Activated CD4-positive, alpha-beta memory T cell treated with anti-CD3 and anti-CD28 coated beads for 36 hours (primary cell): ENCODE measurements at regions of chr5 and their contacts with region 1.

Region 1: DNA sequence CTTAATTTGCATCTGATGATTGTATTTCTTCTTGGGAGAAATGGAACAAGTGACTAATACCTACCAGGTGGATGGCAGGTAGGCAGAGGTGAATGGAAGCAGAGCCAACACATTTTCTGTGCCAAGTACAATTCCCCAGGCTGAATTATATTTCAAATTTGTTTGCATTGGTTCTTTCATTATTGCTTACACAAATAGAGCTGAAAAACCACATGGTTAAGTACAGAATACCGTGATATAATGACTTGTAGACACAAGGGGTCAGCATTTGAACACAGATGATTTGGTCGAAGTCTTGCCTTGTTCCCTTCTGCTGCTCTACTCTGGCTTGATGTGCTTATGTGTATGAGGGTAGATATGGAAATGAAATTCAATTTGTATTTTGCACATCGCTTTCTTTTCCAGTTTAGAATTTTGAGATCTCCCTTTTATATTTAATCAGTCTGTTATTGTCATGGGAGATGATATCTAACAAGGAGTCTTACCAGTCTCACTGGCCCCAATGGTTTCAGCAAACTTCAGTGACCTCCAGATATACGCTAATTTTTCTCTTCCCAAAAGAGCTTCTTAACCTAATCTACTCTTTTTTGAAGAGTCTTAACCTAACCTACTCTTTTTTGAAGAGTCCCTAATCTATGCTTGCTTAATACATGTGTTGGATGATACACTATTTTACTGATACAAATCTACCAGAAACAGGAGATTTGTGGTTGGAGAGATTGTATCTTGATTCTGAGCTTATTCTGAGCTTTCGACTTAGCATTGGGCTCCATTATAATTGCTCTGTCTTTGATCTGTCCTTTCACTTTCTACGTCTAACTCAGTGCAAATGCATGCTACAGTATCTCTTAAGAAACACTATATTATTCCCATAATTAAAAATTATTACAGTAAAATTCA is 88.1 kb downstream of the PCSK1 start:
- DNase-seq: no peak
- H3K4me3 Mint-ChIP-seq: no peak overlapping the region
- H3K27ac Mint-ChIP-seq: no peak overlapping the region
- H3K4me1 Mint-ChIP-seq: peaks cover 27% of the 10 kb centered on the region
- H3K27me3 Mint-ChIP-seq: peaks cover 26% of the 10 kb centered on the region

Region 2: DNA sequence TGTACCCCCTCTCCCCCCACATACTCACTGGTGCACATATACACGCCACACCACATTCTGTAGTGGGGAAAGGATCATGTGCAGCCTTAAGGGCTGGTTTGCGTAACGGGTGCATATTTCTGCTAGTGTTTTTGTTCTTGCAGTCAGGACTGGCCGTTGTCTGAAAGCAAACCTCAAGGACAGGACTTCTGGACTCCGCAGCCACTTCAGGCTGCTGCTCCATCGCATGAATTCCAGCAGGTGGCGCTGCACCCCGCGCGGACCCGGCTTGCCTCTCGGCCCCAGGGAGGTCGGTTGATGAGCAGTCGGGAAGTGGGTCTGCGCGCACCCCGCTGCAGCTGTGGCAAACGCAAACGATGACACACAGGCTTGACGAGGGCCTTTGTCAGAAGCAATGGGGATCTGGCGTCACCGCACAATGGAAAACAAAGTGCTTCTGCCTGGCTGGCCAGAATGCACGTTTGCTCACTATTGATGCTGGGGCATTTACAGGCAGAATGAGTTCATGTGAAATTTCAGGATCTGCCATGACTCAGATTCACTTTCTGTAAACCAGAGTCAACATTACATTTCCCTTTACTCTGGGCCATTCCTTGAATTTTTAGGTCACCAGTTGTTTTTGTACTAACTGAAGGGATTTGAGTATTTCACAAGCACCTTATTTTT is 486.1 kb before region 1 on chr5:
- CTCF ChIA-PET with region 1: interaction called, 63 read pairs
- POLR2A ChIA-PET with region 1: no interaction called
- intact Hi-C with region 1: loop called (anchors 2 kb)
- DNase-seq: peak; percentile 97
- H3K4me3 Mint-ChIP-seq: peak overlapping the region; percentile 40
- H3K27ac Mint-ChIP-seq: peak overlapping the region; percentile 68
- H3K4me1 Mint-ChIP-seq: peaks cover 55% of the 10 kb centered on the region
- H3K27me3 Mint-ChIP-seq: no peaks in the 10 kb centered on the region

Region 3: DNA sequence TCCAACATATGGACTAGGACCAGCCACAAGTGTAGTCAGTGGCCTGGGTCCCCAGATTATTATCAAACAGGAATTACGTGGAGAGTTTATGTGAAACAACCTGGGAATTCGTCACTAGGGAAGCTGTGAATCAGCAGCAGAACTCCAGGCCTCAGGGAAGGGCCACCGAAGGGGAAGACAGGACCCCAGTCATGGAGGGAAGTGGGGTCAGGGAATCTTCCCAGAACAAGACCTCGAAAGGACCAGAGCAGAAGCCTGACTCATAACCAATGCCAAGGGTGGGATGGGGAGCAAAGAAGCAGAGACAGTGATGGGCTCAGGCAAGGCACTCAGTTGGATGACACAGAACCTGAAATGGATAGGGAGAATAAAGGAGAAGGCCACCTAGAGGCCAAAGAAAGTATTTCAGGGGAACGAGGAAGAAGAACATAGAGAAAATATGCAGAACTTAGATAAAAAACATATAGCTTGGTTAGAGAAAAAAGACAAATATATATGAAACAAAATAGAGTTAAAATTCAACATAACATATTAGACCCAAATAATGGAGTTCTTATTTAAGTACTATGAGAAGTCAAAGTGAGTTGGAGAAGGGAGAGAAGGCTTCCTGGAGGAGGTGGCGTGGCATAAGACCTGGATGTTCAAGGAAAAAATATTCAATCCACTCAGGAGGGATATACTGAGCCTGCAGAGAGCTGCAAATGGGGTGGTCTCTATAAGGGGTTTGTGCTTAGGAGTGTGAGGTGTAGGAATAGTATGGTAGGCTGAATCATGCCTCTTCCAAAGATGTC is 250.6 kb after region 1 on chr5:
- CTCF ChIA-PET with region 1: interaction called, 130 read pairs
- POLR2A ChIA-PET with region 1: no interaction called
- intact Hi-C with region 1: no loop called
- DNase-seq: no peak
- H3K4me3 Mint-ChIP-seq: no peak overlapping the region
- H3K27ac Mint-ChIP-seq: no peak overlapping the region
- H3K4me1 Mint-ChIP-seq: peaks cover 13% of the 10 kb centered on the region
- H3K27me3 Mint-ChIP-seq: peaks cover 3% of the 10 kb centered on the region

Region 4: DNA sequence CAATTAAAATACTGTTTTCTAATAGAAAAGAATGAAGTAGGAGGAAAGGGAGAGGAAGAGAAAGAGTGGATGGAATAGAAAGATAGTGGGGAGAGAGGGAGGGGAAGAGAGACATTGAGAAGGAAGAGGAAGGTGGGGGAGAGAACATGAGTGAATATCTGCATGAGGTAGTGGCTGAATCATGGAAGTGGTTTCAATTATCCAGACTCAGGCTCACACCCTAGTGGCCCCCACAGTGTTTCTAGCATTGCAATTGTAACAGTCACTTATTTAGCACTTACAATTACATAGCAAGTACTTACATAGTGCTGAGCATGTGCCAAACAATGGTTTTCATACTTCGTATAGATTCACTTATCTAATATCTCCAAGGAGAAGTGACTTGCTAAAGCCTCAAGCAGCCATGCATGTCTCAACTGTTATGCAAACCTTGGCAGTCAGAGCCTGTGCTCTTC is 390.0 kb after region 1 on chr5:
- CTCF ChIA-PET with region 1: no interaction called
- POLR2A ChIA-PET with region 1: no interaction called
- intact Hi-C with region 1: no loop called
- DNase-seq: no peak
- H3K4me3 Mint-ChIP-seq: no peak overlapping the region
- H3K27ac Mint-ChIP-seq: no peak overlapping the region
- H3K4me1 Mint-ChIP-seq: peaks cover 12% of the 10 kb centered on the region
- H3K27me3 Mint-ChIP-seq: no peaks in the 10 kb centered on the region